Activated naive CD4-positive, alpha-beta T cell treated with anti-CD3 and anti-CD28 coated beads for 36 hours (primary cell): ENCODE measurements at regions of chr15 and their contacts with region 1.

Region 1: GRCh38 chr15:59838900-59839299 is 149.8 kb upstream of the BNIP2 start:
- DNase-seq: peak; percentile 4
- H3K4me3 Mint-ChIP-seq: no peak overlapping the region
- H3K27ac Mint-ChIP-seq: no peak overlapping the region
- H3K4me1 Mint-ChIP-seq: peaks cover 18% of the 10 kb centered on the region
- H3K27me3 Mint-ChIP-seq: no peaks in the 10 kb centered on the region

Region 2: GRCh38 chr15:59814409-59814808 is 24.5 kb before region 1 on chr15:
- CTCF ChIA-PET with region 1: no interaction called
- intact Hi-C with region 1: loop called (anchors 1 kb)
- DNase-seq: peak; percentile 58
- H3K4me3 Mint-ChIP-seq: no peak overlapping the region
- H3K27ac Mint-ChIP-seq: peak overlapping the region; percentile 55
- H3K4me1 Mint-ChIP-seq: peaks cover 31% of the 10 kb centered on the region
- H3K27me3 Mint-ChIP-seq: no peaks in the 10 kb centered on the region